ENCODE measurements at regions of chr6 and their contacts with region 1.

Region 1: DNA sequence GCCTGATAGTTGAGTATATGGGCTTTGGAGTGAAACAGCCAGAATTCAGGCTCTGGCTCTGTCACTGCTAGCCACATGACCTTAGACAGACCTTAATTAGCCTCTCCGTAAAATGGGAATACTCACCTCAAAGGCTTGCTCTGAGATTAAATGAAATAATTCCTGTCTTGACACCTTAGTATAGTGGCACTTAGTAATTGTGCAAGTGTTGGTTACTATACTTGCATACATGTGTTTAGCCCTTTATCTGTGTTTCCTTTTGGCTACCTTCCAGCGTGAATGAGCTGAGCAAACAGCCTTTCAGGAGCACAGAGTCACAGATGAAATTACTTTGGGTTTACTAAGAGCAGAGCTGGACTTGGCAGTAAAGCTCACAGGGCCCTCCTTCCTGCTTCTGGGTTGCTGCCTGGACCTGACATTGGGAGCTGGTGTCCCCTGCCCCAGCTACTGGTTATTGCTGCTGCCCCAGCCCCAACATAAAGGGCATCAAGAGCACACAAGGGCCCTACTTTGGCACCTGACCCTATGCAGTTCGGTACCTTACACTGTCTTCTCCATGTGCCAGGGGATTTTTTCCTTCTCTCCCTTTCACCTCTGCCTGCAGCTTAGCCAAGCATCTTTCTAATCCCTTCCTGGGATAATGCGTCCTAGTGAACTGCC is 32.7 kb downstream of the CD164 start:
- DNase-seq: peak in 1 of 2 experiments; percentile 28
- H3K4me3 ChIP-seq: no peak overlapping the region
- H3K27ac ChIP-seq: no peak overlapping the region
- H3K4me1 ChIP-seq: no peaks in the 10 kb centered on the region
- H3K27me3 ChIP-seq: no peaks in the 10 kb centered on the region
- CTCF ChIP-seq: no peak
- EP300 ChIP-seq: no peak
- POLR2A ChIP-seq: no peak
- RAD21 ChIP-seq: no peak

Region 2: GRCh38 chr6:109362102-109362884 is 12.7 kb after region 1 on chr6:
- CTCF ChIA-PET with region 1: no interaction called
- POLR2A ChIA-PET with region 1: interaction called, 12 read pairs
- DNase-seq: no peak
- H3K4me3 ChIP-seq: no peak overlapping the region
- H3K27ac ChIP-seq: no peak overlapping the region
- H3K4me1 ChIP-seq: no peaks in the 10 kb centered on the region
- H3K27me3 ChIP-seq: no peaks in the 10 kb centered on the region
- CTCF ChIP-seq: no peak
- EP300 ChIP-seq: no peak
- POLR2A ChIP-seq: no peak
- RAD21 ChIP-seq: no peak

Region 3: DNA sequence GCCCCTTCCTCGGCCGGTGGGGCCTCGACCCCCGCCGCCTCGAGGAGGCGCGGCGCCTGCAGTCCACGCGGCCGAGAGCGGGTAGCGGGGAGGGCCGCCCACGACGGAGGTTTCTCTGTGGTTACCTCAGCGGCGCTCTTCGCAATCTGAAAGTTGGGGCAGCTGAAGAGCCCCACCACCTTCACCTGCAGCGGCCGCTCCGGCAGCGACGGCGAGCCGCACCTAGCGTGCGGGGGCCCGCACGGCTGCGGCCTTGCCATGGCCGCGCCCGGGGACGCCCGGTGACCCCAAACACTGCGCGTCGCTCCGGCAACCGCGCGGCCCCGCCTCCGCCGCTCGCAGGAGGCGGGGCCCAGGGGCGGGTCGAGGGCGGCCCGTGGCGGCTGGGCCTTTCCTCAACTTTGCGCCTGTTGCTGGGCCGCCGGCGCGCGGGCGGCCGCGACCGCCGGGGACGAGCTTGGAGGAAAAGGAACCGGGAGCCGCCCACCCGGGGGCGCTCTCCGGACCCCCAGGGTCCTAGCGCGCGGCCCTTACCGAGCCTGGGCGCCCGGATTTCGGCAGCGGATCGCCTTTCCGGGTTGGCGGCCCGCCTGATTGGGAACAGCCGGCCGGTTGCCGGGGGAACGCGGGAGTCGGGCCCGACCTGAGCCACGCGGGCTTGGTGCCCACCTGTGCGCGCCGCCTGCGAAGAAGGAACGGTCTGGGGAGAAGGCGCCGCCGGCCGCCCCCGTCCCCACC is 91.0 kb after region 1 on chr6 and contains the starts of genes PPIL6 and SMPD2:
- CTCF ChIA-PET with region 1: no interaction called
- POLR2A ChIA-PET with region 1: no interaction called
- DNase-seq: peak; percentile 67 to 86
- H3K4me3 ChIP-seq: peak within 1 kb of the TSS; percentile 76 to 92 (median 90)
- H3K27ac ChIP-seq: peak within 1 kb of the TSS; percentile 56
- H3K4me1 ChIP-seq: peaks cover 2 to 9% (median 5%) of the 10 kb centered on the region in 4 experiments
- H3K27me3 ChIP-seq: peaks cover 0 to 2% (median 0%) of the 10 kb centered on the region in 4 experiments; a peak in 1 of 7 replicates
- CTCF ChIP-seq: peak in 1 of 3 experiments; percentile 16; a peak in 1 of 4 replicates
- EP300 ChIP-seq: no peak
- POLR2A ChIP-seq: peak in 1 of 2 experiments; percentile 54; a peak in 2 of 3 replicates
- RAD21 ChIP-seq: no peak; a peak in 1 of 4 replicates
- total RNA-seq, gene PPIL6: 1.3 and 1.5 TPM in 2 replicates
- total RNA-seq, gene SMPD2: 10.5 and 11.5 TPM in 2 replicates

Measured in H1 (cell line).